ENCODE measurements at regions of chr2 and their contacts with region 1.

Region 1: GRCh38 chr2:43226558-43226954 is at the start of gene ZFP36L2:
- H3K4me3 ChIP-seq: peak within 1 kb of the TSS; percentile 85
- H3K27ac ChIP-seq: peak within 1 kb of the TSS; percentile 97
- H3K4me1 ChIP-seq: no peaks in the 10 kb centered on the region; the same call in 1 of the 2 replicates
- CTCF ChIP-seq: no peak

Region 2: GRCh38 chr2:42828487-42829425 is 397.8 kb before region 1 on chr2:
- CTCF ChIA-PET with region 1: interaction called, 10 read pairs
- POLR2A ChIA-PET with region 1: no interaction called
- H3K4me3 ChIP-seq: no peak overlapping the region
- H3K27ac ChIP-seq: no peak overlapping the region
- H3K4me1 ChIP-seq: no peaks in the 10 kb centered on the region
- CTCF ChIP-seq: peak; percentile 87

Region 3: GRCh38 chr2:42974721-42975717 is 251.5 kb before region 1 on chr2:
- CTCF ChIA-PET with region 1: interaction called, 106 read pairs
- POLR2A ChIA-PET with region 1: interaction called, 9 read pairs
- H3K4me3 ChIP-seq: peak overlapping the region; percentile 20; the same call in 1 of the 2 replicates
- H3K27ac ChIP-seq: no peak overlapping the region; the same call in 1 of the 2 replicates
- H3K4me1 ChIP-seq: no peaks in the 10 kb centered on the region
- CTCF ChIP-seq: peak; percentile 93

Region 4: GRCh38 chr2:43127208-43127940 is 99.2 kb before region 1 on chr2:
- CTCF ChIA-PET with region 1: interaction called, 39 read pairs
- POLR2A ChIA-PET with region 1: interaction called, 7 read pairs
- H3K4me3 ChIP-seq: no peak overlapping the region
- H3K27ac ChIP-seq: no peak overlapping the region
- H3K4me1 ChIP-seq: no peaks in the 10 kb centered on the region
- CTCF ChIP-seq: 0 out of 2 replicates have a peak, but pooled peaks have one; percentile 55

Region 5: GRCh38 chr2:43191947-43192516 is 34.5 kb before region 1 on chr2:
- CTCF ChIA-PET with region 1: interaction called, 10 read pairs
- POLR2A ChIA-PET with region 1: no interaction called
- H3K4me3 ChIP-seq: no peak overlapping the region
- H3K27ac ChIP-seq: no peak overlapping the region
- H3K4me1 ChIP-seq: no peaks in the 10 kb centered on the region
- CTCF ChIP-seq: no peak

Region 6: DNA sequence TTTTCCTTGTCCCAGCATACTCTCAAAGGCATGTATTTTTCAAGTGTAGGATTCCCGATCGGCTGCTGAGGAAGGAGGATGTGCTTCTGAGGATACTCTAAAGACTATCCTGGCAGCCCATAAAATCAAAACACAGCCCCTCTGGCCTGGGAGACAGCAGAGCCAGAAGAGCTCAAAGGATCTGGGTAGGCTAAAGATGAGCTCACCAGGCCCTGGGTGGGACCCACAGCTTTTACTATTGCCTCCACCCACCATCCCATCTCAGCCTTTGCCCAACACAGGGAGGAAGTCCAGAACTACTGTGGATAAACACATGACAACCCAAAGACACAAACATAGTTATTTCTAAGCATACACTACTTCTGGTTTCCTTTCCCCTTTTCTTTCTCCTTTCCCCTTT is 79.0 kb after region 1 on chr2:
- CTCF ChIA-PET with region 1: no interaction called
- POLR2A ChIA-PET with region 1: no interaction called
- H3K4me3 ChIP-seq: no peak overlapping the region
- H3K27ac ChIP-seq: no peak overlapping the region
- H3K4me1 ChIP-seq: peaks cover 15% of the 10 kb centered on the region
- CTCF ChIP-seq: no peak

Region 7: DNA sequence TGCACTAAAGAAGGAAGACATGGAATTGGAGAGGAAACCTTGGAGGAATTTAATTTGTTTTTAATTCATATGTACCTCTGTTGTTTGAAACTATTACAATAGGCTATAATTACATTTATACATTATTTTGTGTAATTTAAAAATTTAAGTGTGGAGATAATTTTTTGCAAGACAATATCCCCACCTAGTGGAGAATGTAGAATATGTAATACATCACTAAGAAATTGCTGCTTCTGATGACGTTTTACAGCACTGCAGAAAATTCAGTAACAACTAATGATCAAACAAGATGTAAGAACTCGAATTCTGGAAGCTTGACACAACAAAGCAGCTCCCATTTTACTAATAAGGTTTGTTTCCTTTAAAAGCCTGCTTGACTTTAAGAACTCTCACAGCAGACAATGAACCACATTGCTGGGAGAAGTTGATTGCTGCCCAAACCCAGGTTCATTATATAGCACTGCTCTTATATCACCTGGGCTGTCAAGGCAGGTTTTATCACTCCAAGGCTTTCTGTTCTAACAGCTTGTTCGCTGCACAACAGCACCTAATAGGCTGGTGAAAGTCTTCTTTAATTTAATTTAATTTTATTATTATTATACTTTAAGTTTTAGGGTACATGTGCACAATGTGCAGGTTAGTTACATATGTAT is 315.9 kb after region 1 on chr2:
- CTCF ChIA-PET with region 1: interaction called, 22 read pairs
- POLR2A ChIA-PET with region 1: interaction called, 3 read pairs
- H3K4me3 ChIP-seq: no peak overlapping the region
- H3K27ac ChIP-seq: no peak overlapping the region
- H3K4me1 ChIP-seq: no peaks in the 10 kb centered on the region
- CTCF ChIP-seq: no peak